ENCODE measurements at regions of chr6 and their contacts with region 1.

Region 1: GRCh38 chr6:24646782-24647181 is 791 bp upstream of the KIAA0319 start:
- DNase-seq: no peak
- H3K4me3 ChIP-seq: peak overlapping the region; percentile 54
- H3K4me3 Mint-ChIP-seq: peak overlapping the region; percentile 88
- H3K27ac Mint-ChIP-seq: peak overlapping the region; percentile 87
- H3K4me1 ChIP-seq: no peaks in the 10 kb centered on the region
- H3K4me1 Mint-ChIP-seq: peaks cover 9% of the 10 kb centered on the region
- H3K27me3 ChIP-seq: no peaks in the 10 kb centered on the region
- H3K27me3 Mint-ChIP-seq: no peaks in the 10 kb centered on the region
- CTCF ChIP-seq: no peak

Region 2: DNA sequence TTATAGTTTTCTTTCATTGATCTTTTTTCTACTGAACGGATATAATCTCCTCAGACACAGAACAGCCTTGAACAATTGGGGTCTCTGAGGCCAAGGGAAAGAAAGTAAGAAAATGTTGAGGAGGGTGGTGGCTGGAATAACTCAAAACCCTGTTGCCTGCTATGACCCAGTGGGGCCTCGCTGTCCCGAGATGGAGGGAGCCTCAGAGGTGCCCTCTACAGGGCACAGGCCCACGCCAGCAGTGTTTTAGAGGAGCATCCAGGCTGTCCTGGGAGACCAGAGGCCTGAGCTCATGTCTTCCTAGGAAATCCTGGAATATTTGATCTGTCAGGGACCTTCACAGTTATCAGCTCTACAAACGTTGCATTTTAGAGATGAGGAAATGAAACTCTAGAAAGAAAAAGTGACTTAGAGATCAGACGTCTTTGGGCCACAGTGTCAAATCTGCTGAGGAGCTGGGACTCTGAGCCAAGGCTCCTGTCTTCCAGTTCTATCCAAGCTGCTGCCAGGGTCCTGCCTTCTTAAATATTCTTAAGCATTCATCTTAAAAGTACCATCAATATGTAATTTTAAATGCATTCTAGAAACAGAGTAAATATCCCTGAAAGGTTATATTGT is 125.7 kb before region 1 on chr6:
- CTCF ChIA-PET with region 1: no interaction called
- POLR2A ChIA-PET with region 1: no interaction called
- intact Hi-C with region 1: no loop called
- DNase-seq: peak; percentile 70 to 79
- H3K4me3 ChIP-seq: no peak overlapping the region
- H3K4me3 Mint-ChIP-seq: no peak overlapping the region
- H3K27ac Mint-ChIP-seq: no peak overlapping the region
- H3K4me1 ChIP-seq: no peaks in the 10 kb centered on the region
- H3K4me1 Mint-ChIP-seq: peaks cover 12% of the 10 kb centered on the region
- H3K27me3 ChIP-seq: no peaks in the 10 kb centered on the region
- H3K27me3 Mint-ChIP-seq: no peaks in the 10 kb centered on the region
- CTCF ChIP-seq: peak; percentile 76 to 93

Region 3: DNA sequence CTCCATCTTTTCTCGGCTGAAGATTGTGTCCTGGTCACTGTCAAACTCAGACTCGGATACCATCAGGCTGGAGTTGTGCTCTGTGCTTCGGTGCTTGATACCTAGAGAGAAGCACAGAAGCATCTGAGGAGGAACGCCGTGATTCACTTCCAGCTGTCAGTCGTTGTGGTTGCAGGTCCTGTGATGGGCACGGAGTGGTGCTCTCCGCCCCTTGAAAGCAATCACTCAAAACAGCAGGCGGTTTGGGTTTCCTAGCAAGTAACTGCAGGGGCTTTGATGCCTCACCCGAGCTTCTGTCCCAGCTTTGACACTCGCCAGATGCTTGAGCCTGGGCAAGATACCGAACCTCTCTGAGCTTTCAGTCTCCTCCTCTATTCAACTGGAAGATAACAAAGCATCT is 99.5 kb before region 1 on chr6:
- CTCF ChIA-PET with region 1: no interaction called
- POLR2A ChIA-PET with region 1: no interaction called
- intact Hi-C with region 1: no loop called
- DNase-seq: no peak
- H3K4me3 ChIP-seq: no peak overlapping the region
- H3K4me3 Mint-ChIP-seq: no peak overlapping the region
- H3K27ac Mint-ChIP-seq: no peak overlapping the region
- H3K4me1 ChIP-seq: peaks cover 10% of the 10 kb centered on the region
- H3K4me1 Mint-ChIP-seq: peaks cover 11% of the 10 kb centered on the region
- H3K27me3 ChIP-seq: no peaks in the 10 kb centered on the region
- H3K27me3 Mint-ChIP-seq: no peaks in the 10 kb centered on the region
- CTCF ChIP-seq: no peak

Region 4: DNA sequence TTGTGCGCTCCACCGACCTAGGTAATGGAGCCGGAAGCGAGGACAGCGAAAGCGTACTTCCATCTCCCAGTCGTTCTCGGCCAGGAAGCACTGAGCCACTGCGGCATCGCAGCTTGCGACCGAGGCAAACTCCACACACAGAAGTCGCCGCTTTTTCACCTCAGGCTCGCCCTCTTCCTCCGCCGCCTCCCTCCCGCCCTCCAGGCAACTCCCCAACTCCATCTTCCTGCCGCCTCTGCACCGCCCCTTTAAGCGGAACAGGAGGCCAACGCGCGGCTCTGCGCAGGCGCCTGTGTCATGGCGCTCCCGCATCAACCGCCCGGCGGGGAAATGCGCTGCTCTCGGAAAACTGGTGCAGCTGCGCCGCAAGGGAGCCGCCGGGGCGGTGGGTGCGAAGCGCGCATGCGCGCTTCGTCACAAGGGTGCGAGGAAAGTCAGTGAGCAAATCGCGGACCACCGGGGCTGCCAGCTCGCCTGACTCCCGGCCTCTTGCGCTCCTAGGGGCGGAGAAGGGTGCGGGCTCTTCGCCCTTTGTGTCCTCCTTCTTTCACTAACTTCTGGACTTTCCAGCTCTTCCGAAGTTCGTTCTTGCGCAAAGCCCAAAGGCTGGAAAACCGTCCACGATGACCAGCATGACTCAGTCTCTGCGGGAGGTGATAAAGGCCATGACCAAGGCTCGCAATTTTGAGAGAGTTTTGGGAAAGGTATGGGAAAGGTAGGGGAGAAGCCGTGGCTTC is 20.0 kb after region 1 on chr6 and contains the starts of genes ACOT13 and TDP2:
- CTCF ChIA-PET with region 1: no interaction called
- POLR2A ChIA-PET with region 1: interaction called, 4 read pairs
- intact Hi-C with region 1: loop called (anchors 2 kb)
- DNase-seq: peak; percentile 94 to 96
- H3K4me3 ChIP-seq: peak within 1 kb of the TSS; percentile 90
- H3K4me3 Mint-ChIP-seq: peak within 1 kb of the TSS; percentile 85
- H3K27ac Mint-ChIP-seq: peak within 1 kb of the TSS; percentile 94
- H3K4me1 ChIP-seq: peaks cover 29% of the 10 kb centered on the region
- H3K4me1 Mint-ChIP-seq: peaks cover 32% of the 10 kb centered on the region
- H3K27me3 ChIP-seq: no peaks in the 10 kb centered on the region
- H3K27me3 Mint-ChIP-seq: no peaks in the 10 kb centered on the region
- CTCF ChIP-seq: peak; percentile 52 to 62
- total RNA-seq, gene ACOT13: 55.6 and 63.1 TPM in 2 replicates
- total RNA-seq, gene TDP2: 46.7 and 47.2 TPM in 2 replicates

Region 5: GRCh38 chr6:24689964-24690363 is 43.2 kb after region 1 on chr6:
- CTCF ChIA-PET with region 1: no interaction called
- POLR2A ChIA-PET with region 1: no interaction called
- intact Hi-C with region 1: loop called (anchors 2 kb)
- DNase-seq: no peak
- H3K4me3 ChIP-seq: no peak overlapping the region
- H3K4me3 Mint-ChIP-seq: no peak overlapping the region
- H3K27ac Mint-ChIP-seq: no peak overlapping the region
- H3K4me1 ChIP-seq: no peaks in the 10 kb centered on the region
- H3K4me1 Mint-ChIP-seq: peaks cover 19% of the 10 kb centered on the region
- H3K27me3 ChIP-seq: no peaks in the 10 kb centered on the region
- H3K27me3 Mint-ChIP-seq: no peaks in the 10 kb centered on the region
- CTCF ChIP-seq: no peak

Region 6: GRCh38 chr6:25675167-25675566 is 1028.4 kb after region 1 on chr6:
- CTCF ChIA-PET with region 1: no interaction called
- POLR2A ChIA-PET with region 1: no interaction called
- intact Hi-C with region 1: no loop called
- DNase-seq: no peak
- H3K4me3 ChIP-seq: no peak overlapping the region
- H3K4me3 Mint-ChIP-seq: no peak overlapping the region
- H3K27ac Mint-ChIP-seq: no peak overlapping the region
- H3K4me1 ChIP-seq: no peaks in the 10 kb centered on the region
- H3K4me1 Mint-ChIP-seq: no peaks in the 10 kb centered on the region
- H3K27me3 ChIP-seq: no peaks in the 10 kb centered on the region
- H3K27me3 Mint-ChIP-seq: no peaks in the 10 kb centered on the region
- CTCF ChIP-seq: no peak

Measured in Caco-2 (cell line).